AG04450 (cell line): ENCODE measurements at regions of chr7 and their contacts with region 1.

Region 1: DNA sequence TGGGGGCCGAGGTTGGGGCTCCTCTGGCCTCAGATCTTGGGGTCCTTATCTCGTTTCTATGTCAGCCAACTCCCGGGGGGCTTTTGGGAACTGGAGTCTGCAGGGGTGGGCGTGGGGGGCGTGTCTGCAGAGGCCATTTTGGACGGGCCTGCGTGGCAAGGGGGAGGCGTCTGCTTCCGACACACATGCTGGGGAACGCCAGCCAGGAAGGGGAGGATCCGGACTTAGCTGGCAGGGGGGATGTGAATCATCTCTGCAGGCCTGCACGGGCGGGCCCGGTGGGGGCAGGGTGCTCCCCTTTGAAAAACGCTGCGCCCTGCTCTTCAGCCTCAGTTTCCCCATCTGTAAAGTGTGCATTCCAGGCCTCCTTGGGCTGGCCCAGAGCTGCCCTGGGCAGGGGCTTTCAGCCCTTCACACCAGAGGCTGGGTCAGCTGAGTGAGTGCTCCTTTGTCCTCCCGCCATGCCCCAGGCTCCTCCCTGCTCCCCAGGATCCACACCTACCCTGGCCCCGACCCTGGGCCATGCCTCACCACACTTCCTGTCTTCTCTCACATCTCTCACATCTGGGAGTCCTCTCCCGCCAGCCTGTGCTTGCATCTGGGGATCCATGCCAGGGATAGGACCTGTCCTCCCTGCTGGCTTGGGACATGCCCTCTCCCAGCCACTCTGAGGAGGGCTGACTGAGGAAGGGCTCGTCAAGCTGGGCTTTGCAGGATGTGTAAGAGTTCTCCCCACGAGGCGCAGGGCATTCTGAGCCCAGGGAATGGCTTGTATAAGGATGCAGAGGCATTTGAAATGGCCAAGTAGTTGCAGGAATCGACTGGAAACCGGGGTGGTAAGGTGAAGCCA is 172.6 kb upstream of the TNRC18 start:
- DNase-seq: peak; percentile 79
- H3K4me3 ChIP-seq: peak overlapping the region; percentile 90
- H3K27ac ChIP-seq: peak overlapping the region; percentile 89
- H3K27me3 ChIP-seq: no peaks in the 10 kb centered on the region
- CTCF ChIP-seq: no peak

Region 2: GRCh38 chr7:5610500-5611186 is 14.4 kb after region 1 on chr7:
- CTCF ChIA-PET with region 1: no interaction called
- POLR2A ChIA-PET with region 1: interaction called, 10 read pairs
- DNase-seq: no peak
- H3K4me3 ChIP-seq: no peak overlapping the region
- H3K27ac ChIP-seq: no peak overlapping the region
- H3K27me3 ChIP-seq: no peaks in the 10 kb centered on the region
- CTCF ChIP-seq: no peak

Region 3: GRCh38 chr7:5636914-5637313 is 40.6 kb after region 1 on chr7:
- CTCF ChIA-PET with region 1: no interaction called
- POLR2A ChIA-PET with region 1: interaction called, 12 read pairs
- DNase-seq: peak; percentile 61
- H3K4me3 ChIP-seq: no peak overlapping the region
- H3K27ac ChIP-seq: peak overlapping the region; percentile 49
- H3K27me3 ChIP-seq: no peaks in the 10 kb centered on the region
- CTCF ChIP-seq: no peak

Region 4: DNA sequence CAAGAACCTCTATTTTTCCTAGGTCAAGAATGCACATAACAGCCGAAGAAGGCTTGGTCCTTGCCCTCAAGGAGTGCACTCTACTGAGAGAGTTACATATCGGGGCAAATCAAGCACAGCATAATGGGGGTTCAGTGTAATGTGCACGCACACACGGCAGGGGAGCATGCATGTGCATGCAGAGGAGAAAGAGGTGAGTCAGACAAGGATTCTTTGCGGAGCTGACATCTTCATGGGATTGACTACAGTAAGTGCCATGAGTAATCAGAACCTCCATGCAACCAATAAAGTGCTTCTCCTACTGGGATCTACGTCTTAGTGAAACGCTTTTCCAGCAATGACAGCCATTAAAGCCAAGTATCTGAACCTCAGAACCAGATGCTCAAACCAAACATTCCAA is 61.6 kb after region 1 on chr7:
- CTCF ChIA-PET with region 1: no interaction called
- POLR2A ChIA-PET with region 1: interaction called, 10 read pairs
- DNase-seq: no peak
- H3K4me3 ChIP-seq: no peak overlapping the region
- H3K27ac ChIP-seq: no peak overlapping the region
- H3K27me3 ChIP-seq: no peaks in the 10 kb centered on the region
- CTCF ChIP-seq: no peak